H1 (cell line): ENCODE measurements at regions of chr1 and their contacts with region 1.

Region 1: DNA sequence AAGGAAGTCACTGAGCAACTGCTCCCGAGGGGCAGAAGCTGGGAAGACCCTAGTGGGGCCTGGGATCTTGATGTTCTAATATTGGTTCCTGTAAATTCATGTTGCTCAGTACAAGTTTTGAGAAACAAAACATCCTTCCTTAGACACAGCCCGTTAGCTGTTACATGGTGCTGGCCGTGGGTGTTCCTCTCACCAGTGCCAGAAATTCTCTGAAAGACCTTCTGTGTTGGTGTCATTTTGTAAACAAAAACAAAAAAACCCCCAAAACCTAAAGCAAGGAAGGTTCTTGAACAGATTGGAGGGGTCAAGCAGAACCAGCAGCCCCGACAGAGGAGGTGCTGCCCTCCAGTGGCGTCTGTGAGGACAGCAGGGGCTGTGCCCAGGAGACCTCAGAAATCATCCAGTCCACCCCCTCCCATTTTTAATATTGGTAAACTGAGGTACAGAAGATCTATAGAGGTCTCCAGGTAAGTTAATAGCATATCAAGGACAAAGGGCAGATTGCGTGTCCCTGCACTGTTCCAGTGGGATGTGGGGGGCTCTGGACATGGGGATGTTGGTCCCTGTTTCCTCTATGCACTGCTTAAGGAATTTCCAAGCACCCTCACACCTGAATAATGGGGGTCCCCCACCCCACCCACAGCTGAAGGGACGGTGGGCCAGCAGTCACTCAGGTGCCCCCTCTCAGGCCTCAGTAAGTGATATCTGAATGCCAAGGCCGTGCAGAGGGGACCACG is 38.2 kb downstream of the SLC2A7 start:
- DNase-seq: peak in 1 of 2 experiments; percentile 95
- H3K4me3 ChIP-seq: no peak overlapping the region
- H3K27ac ChIP-seq: no peak overlapping the region
- H3K4me1 ChIP-seq: peaks cover 0 to 2% (median 0%) of the 10 kb centered on the region in 4 experiments; a peak in 2 of 7 replicates
- H3K27me3 ChIP-seq: no peaks in the 10 kb centered on the region
- CTCF ChIP-seq: peak; percentile 89 to 95 (median 94)
- EP300 ChIP-seq: no peak
- POLR2A ChIP-seq: no peak
- RAD21 ChIP-seq: peak; percentile 83 to 93

Region 2: GRCh38 chr1:8858888-8859706 is 129.0 kb before region 1 on chr1:
- CTCF ChIA-PET with region 1: interaction called, 15 read pairs
- POLR2A ChIA-PET with region 1: interaction called, 8 read pairs
- DNase-seq: no peak
- H3K4me3 ChIP-seq: no peak overlapping the region
- H3K27ac ChIP-seq: no peak overlapping the region
- H3K4me1 ChIP-seq: peaks cover 2 to 6% (median 3%) of the 10 kb centered on the region in 4 experiments; a peak in 6 of 7 replicates
- H3K27me3 ChIP-seq: no peaks in the 10 kb centered on the region
- CTCF ChIP-seq: peak in 2 of 3 experiments; percentile 61 to 72; a peak in 3 of 4 replicates
- EP300 ChIP-seq: no peak
- POLR2A ChIP-seq: peak; percentile 23 to 31; a peak in 2 of 3 replicates
- RAD21 ChIP-seq: peak; percentile 48 to 62; a peak in 3 of 4 replicates

Region 3: GRCh38 chr1:8913111-8913856 is 74.8 kb before region 1 on chr1:
- CTCF ChIA-PET with region 1: interaction called, 25 read pairs
- POLR2A ChIA-PET with region 1: no interaction called
- DNase-seq: no peak
- H3K4me3 ChIP-seq: no peak overlapping the region
- H3K27ac ChIP-seq: no peak overlapping the region
- H3K4me1 ChIP-seq: peaks cover 0 to 11% (median 7%) of the 10 kb centered on the region in 4 experiments; a peak in 5 of 7 replicates
- H3K27me3 ChIP-seq: no peaks in the 10 kb centered on the region
- CTCF ChIP-seq: no peak
- EP300 ChIP-seq: no peak
- POLR2A ChIP-seq: no peak
- RAD21 ChIP-seq: no peak

Region 4: DNA sequence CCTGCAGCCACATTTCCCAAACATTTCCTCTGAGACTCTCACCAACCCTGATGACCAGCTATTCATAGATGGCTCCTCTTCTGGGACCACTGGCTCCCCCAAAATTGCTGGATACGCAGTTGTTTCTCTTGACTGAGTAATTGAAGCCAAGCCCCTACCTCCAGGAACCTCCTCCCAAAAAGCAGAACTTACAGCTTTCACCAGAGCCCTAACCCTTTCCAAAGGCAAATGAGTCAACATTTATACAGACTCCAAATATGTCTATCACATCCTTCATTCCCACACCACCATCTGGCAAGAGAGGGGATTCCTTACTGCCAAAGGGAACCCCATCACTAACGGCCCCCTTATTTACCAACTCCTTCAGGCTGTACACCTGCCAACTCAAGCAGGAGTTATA is 62.6 kb before region 1 on chr1:
- CTCF ChIA-PET with region 1: interaction called, 12 read pairs
- POLR2A ChIA-PET with region 1: no interaction called
- DNase-seq: no peak
- H3K4me3 ChIP-seq: no peak overlapping the region
- H3K27ac ChIP-seq: no peak overlapping the region
- H3K4me1 ChIP-seq: no peaks in the 10 kb centered on the region
- H3K27me3 ChIP-seq: no peaks in the 10 kb centered on the region; a peak in 1 of 7 replicates
- CTCF ChIP-seq: no peak
- EP300 ChIP-seq: no peak
- POLR2A ChIP-seq: no peak
- RAD21 ChIP-seq: no peak

Region 5: DNA sequence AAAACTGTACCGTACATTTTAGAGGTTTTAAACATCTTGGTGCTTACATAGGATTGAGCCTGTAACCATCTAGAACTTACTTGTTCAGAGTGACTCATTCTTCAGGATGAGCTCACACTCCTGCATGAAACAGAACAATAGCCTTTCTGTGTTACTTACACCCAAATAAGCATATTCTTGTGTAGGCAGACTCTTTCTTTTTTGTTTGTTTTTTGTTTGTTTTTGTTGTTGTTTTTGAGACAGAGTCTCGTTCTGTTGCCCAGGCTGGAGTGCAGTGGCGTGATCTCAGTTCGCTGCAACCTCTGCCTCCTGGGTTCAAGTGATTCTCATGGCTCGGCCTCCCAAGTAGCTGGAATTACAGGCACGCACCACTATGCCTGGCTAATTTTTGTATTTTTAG is 46.1 kb before region 1 on chr1:
- CTCF ChIA-PET with region 1: interaction called, 11 read pairs
- POLR2A ChIA-PET with region 1: no interaction called
- DNase-seq: no peak
- H3K4me3 ChIP-seq: no peak overlapping the region
- H3K27ac ChIP-seq: no peak overlapping the region
- H3K4me1 ChIP-seq: peaks cover 7 to 24% (median 14%) of the 10 kb centered on the region in 4 experiments
- H3K27me3 ChIP-seq: no peaks in the 10 kb centered on the region
- CTCF ChIP-seq: no peak
- EP300 ChIP-seq: no peak
- POLR2A ChIP-seq: no peak
- RAD21 ChIP-seq: no peak

Region 6: DNA sequence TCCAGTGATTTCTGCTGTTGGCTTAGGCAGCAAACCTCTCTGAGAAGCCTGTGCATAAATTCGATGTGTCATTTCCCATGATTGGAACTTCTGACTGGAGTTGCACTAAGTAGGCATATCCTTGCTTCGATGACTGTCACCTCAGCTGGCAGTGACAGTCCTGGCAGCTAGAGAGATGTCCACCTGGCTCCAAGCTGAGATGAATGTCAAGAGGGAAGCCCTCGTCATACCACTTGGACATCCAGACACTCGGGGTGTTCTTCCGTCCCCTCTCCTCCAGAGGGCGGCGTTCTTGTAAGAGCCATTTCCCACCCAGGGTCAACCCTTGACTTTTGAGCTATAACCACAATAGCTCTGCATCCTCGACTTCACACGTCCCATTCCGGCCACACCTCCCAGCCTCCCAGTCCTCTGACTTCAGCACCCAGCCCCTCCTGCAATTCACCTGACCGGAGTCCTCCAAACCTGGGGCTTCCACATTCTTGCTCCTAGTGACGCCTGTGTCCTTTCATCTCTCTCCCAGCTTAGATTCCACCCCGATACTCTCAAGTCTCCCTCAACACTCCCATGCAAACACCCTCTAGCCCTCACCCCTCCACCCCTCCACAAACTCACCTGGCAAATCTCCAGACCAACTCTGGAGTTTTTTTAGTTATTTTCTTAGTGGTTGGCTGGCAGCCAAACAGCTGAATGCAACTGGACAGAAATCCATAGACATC is 25.1 kb before region 1 on chr1:
- CTCF ChIA-PET with region 1: interaction called, 43 read pairs
- POLR2A ChIA-PET with region 1: interaction called, 3 read pairs
- DNase-seq: peak; percentile 62 to 76
- H3K4me3 ChIP-seq: no peak overlapping the region
- H3K27ac ChIP-seq: no peak overlapping the region
- H3K4me1 ChIP-seq: peaks cover 0 to 2% (median 1%) of the 10 kb centered on the region in 4 experiments; a peak in 4 of 7 replicates
- H3K27me3 ChIP-seq: no peaks in the 10 kb centered on the region; a peak in 1 of 7 replicates
- CTCF ChIP-seq: peak; percentile 73 to 87 (median 78)
- EP300 ChIP-seq: no peak
- POLR2A ChIP-seq: no peak
- RAD21 ChIP-seq: peak; percentile 46 to 64; a peak in 3 of 4 replicates